ENCODE measurements at regions of chrX and their contacts with region 1.

Region 1: DNA sequence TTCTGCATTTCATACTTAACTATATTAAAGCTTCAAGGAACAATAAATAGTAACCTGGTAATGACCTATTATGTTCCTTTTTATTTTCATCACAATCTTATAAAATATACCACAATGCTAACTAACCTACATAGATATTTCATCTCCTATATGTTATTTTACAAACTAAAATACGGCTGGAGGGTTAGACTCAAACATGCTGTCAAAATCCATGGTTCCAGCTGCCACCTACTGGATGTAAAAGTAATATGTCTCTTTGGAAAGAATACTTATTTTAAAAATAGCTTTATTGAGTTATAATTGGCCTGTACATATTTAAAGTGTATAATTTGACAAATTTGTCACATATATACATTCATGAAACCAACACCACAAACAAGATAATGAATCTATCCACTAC is 15.0 kb downstream of the RGN start:
- DNase-seq: peak; percentile 64
- H3K4me3 ChIP-seq: no peak overlapping the region
- H3K27ac ChIP-seq: no peak overlapping the region
- H3K4me1 ChIP-seq: peaks cover 6% of the 10 kb centered on the region
- H3K27me3 ChIP-seq: peaks cover 3% of the 10 kb centered on the region
- CTCF ChIP-seq: peak; percentile 66

Region 2: GRCh38 chrX:46554942-46555341 is 538.3 kb before region 1 on chrX:
- CTCF ChIA-PET with region 1: interaction called, 3 read pairs
- POLR2A ChIA-PET with region 1: no interaction called
- intact Hi-C with region 1: loop called (anchors 10 kb)
- DNase-seq: peak; percentile 54
- H3K4me3 ChIP-seq: no peak overlapping the region
- H3K27ac ChIP-seq: no peak overlapping the region
- H3K4me1 ChIP-seq: no peaks in the 10 kb centered on the region
- H3K27me3 ChIP-seq: no peaks in the 10 kb centered on the region
- CTCF ChIP-seq: peak; percentile 53; the same call in 1 of the 2 replicates

Region 3: DNA sequence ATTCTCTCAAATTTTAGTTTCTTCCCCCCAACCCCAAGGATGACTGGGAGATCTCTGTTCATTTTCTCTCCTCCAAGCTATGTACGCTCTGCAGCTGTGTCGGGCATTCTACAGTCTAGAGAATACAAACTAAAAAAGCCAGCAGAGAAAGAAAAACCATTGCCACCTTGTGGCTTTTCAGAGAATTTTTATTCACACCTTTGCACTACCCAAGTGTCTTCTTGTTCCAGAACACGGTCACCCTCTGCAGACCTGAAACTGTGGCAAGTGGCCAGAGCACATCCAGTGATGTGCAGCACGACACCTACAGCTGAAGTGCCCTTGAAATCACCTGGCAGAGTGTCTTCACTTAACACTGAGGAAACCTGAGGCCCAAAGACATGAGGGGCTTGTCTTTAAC is 451.1 kb before region 1 on chrX:
- CTCF ChIA-PET with region 1: no interaction called
- POLR2A ChIA-PET with region 1: no interaction called
- intact Hi-C with region 1: loop called (anchors 10 kb)
- DNase-seq: peak; percentile 65
- H3K4me3 ChIP-seq: no peak overlapping the region
- H3K27ac ChIP-seq: no peak overlapping the region
- H3K4me1 ChIP-seq: peaks cover 4% of the 10 kb centered on the region
- H3K27me3 ChIP-seq: no peaks in the 10 kb centered on the region
- CTCF ChIP-seq: peak; percentile 53

Region 4: DNA sequence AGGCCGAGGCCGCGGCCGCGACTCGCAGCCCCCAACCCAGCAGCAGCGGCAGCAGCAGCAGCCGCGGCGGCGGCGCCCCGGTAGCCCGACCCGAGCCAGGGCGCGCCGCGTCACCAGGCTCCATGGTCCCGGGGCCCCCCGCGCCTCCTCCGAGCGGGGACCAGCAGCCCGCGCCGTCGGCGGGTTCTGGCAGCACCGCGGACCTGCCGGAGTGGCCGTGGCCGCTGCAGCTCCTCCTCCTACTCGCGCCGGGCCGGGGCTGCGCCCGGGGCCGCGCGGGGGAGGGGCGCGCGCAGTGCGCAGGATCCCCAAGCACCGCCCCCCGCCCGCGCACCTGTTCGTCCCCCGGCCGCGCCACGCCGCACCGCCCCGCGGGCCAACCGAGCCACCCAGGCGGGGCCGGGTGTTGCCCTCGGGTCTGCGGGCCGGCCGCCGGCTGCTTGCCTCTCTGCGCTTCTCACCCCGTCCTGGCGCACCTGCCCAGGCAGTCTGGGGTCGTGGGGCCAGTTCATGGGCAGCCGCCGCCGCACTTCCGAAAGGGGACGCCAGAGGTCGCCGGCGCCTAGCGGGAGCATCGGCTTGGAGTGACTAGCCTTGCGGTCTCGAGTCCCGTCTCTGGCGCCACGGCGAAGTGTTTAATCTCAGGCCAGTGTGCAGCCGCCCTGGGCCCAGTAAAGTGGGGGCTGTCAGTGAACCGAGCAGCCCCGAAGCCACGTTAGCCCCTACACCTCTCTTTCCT is 334.2 kb before region 1 on chrX and contains the start of gene SLC9A7:
- CTCF ChIA-PET with region 1: no interaction called
- POLR2A ChIA-PET with region 1: no interaction called
- intact Hi-C with region 1: loop called (anchors 2 kb)
- DNase-seq: peak; percentile 77
- H3K4me3 ChIP-seq: peak within 1 kb of the TSS; percentile 57
- H3K27ac ChIP-seq: no peak within 1 kb of the TSS
- H3K4me1 ChIP-seq: no peaks in the 10 kb centered on the region
- H3K27me3 ChIP-seq: no peaks in the 10 kb centered on the region
- CTCF ChIP-seq: peak; percentile 70
- total RNA-seq, gene SLC9A7: 11.3 and 13.1 TPM in 2 replicates

Region 5: GRCh38 chrX:46967547-46967946 is 125.7 kb before region 1 on chrX:
- CTCF ChIA-PET with region 1: no interaction called
- POLR2A ChIA-PET with region 1: no interaction called
- intact Hi-C with region 1: no loop called
- DNase-seq: no peak
- H3K4me3 ChIP-seq: no peak overlapping the region
- H3K27ac ChIP-seq: no peak overlapping the region
- H3K4me1 ChIP-seq: peaks cover 44% of the 10 kb centered on the region
- H3K27me3 ChIP-seq: no peaks in the 10 kb centered on the region
- CTCF ChIP-seq: no peak

Measured in A673 (cell line).